ENCODE measurements at regions of chr6 and their contacts with region 1.

Region 1: GRCh38 chr6:118683881-118684872 is 32.8 kb upstream of the CEP85L start:
- DNase-seq: no peak
- ATAC-seq: no peak
- H3K4me3 ChIP-seq: no peak overlapping the region
- H3K4me3 Mint-ChIP-seq: peak overlapping the region; percentile 42
- H3K27ac ChIP-seq: no peak overlapping the region
- H3K27ac Mint-ChIP-seq: peak overlapping the region; percentile 76
- H3K4me1 ChIP-seq: peaks cover 37% of the 10 kb centered on the region
- H3K4me1 Mint-ChIP-seq: peaks cover 77% of the 10 kb centered on the region
- H3K27me3 ChIP-seq: no peaks in the 10 kb centered on the region
- H3K27me3 Mint-ChIP-seq: no peaks in the 10 kb centered on the region
- CTCF ChIP-seq: no peak

Region 2: GRCh38 chr6:118632359-118632758 is 51.8 kb before region 1 on chr6:
- CTCF ChIA-PET with region 1: no interaction called
- POLR2A ChIA-PET with region 1: no interaction called
- intact Hi-C with region 1: no loop called
- DNase-seq: no peak
- ATAC-seq: no peak
- H3K4me3 ChIP-seq: no peak overlapping the region
- H3K4me3 Mint-ChIP-seq: no peak overlapping the region
- H3K27ac ChIP-seq: no peak overlapping the region
- H3K27ac Mint-ChIP-seq: no peak overlapping the region
- H3K4me1 ChIP-seq: peaks cover 10% of the 10 kb centered on the region
- H3K4me1 Mint-ChIP-seq: peaks cover 73% of the 10 kb centered on the region
- H3K27me3 ChIP-seq: no peaks in the 10 kb centered on the region
- H3K27me3 Mint-ChIP-seq: no peaks in the 10 kb centered on the region
- CTCF ChIP-seq: no peak

Region 3: DNA sequence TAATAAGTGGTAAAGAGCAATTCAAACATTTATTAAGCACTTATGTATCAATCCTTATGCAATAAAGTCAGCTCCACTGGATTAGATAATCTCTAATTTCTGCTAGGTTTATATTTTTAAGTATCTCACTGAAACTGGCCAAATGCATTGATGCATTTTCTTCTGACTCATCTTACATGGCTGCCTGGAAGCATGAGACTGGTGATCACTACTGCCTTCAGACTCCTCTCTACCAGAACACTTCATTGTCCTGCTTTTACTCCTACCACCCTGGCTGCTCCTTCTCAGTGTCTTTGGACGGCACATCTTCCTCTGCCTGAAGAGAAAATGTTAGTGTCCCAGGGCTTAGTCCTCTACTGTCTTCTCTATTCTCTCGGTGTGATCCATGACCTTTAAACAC is 40.2 kb before region 1 on chr6:
- CTCF ChIA-PET with region 1: no interaction called
- POLR2A ChIA-PET with region 1: no interaction called
- intact Hi-C with region 1: no loop called
- DNase-seq: no peak
- ATAC-seq: no peak
- H3K4me3 ChIP-seq: no peak overlapping the region
- H3K4me3 Mint-ChIP-seq: no peak overlapping the region
- H3K27ac ChIP-seq: no peak overlapping the region
- H3K27ac Mint-ChIP-seq: peak overlapping the region; percentile 15
- H3K4me1 ChIP-seq: peaks cover 22% of the 10 kb centered on the region
- H3K4me1 Mint-ChIP-seq: peaks cover 55% of the 10 kb centered on the region
- H3K27me3 ChIP-seq: no peaks in the 10 kb centered on the region
- H3K27me3 Mint-ChIP-seq: no peaks in the 10 kb centered on the region
- CTCF ChIP-seq: no peak

Region 4: GRCh38 chr6:118668761-118669385 is 15.3 kb before region 1 on chr6:
- CTCF ChIA-PET with region 1: interaction called, 4 read pairs
- POLR2A ChIA-PET with region 1: no interaction called
- intact Hi-C with region 1: loop called in 1 of 2 experiments (anchors 2 kb)
- DNase-seq: no peak
- ATAC-seq: no peak
- H3K4me3 ChIP-seq: no peak overlapping the region
- H3K4me3 Mint-ChIP-seq: no peak overlapping the region
- H3K27ac ChIP-seq: no peak overlapping the region
- H3K27ac Mint-ChIP-seq: peak overlapping the region; percentile 52
- H3K4me1 ChIP-seq: peaks cover 50% of the 10 kb centered on the region
- H3K4me1 Mint-ChIP-seq: peaks cover 87% of the 10 kb centered on the region
- H3K27me3 ChIP-seq: no peaks in the 10 kb centered on the region
- H3K27me3 Mint-ChIP-seq: no peaks in the 10 kb centered on the region
- CTCF ChIP-seq: no peak

Region 5: DNA sequence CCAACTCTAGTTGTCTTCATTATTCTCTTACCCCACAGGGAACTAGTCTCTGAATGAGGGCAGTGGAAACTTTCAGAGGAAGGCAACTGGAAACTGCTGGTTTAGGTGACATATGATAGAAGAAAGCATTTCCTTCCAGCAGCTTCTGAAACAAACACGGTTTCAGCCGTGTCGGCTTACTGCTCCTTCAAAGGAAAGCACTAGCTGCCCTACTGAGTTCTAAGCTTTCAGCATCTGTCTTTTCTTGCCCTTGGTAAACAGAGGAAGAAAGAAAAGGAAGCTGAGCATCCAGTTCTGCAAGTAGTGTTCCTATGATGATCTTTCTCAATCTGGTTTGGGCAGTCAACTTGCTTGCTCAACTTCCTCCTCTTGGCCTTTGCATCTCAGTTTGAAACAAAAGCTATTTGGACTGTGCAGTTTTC is 84.7 kb after region 1 on chr6:
- CTCF ChIA-PET with region 1: no interaction called
- POLR2A ChIA-PET with region 1: no interaction called
- intact Hi-C with region 1: no loop called
- DNase-seq: peak in 6 of 9 experiments; percentile 2 to 57 (median 15)
- ATAC-seq: peak; percentile 44
- H3K4me3 ChIP-seq: peak overlapping the region in 1 of 2 experiments; percentile 10
- H3K4me3 Mint-ChIP-seq: peak overlapping the region; percentile 35
- H3K27ac ChIP-seq: peak overlapping the region in 1 of 2 experiments; percentile 66
- H3K27ac Mint-ChIP-seq: peak overlapping the region; percentile 91
- H3K4me1 ChIP-seq: peaks cover 14% of the 10 kb centered on the region
- H3K4me1 Mint-ChIP-seq: peaks cover 26% of the 10 kb centered on the region
- H3K27me3 ChIP-seq: no peaks in the 10 kb centered on the region
- H3K27me3 Mint-ChIP-seq: no peaks in the 10 kb centered on the region
- CTCF ChIP-seq: no peak